ENCODE measurements at regions of chr10 and their contacts with region 1.

Region 1: DNA sequence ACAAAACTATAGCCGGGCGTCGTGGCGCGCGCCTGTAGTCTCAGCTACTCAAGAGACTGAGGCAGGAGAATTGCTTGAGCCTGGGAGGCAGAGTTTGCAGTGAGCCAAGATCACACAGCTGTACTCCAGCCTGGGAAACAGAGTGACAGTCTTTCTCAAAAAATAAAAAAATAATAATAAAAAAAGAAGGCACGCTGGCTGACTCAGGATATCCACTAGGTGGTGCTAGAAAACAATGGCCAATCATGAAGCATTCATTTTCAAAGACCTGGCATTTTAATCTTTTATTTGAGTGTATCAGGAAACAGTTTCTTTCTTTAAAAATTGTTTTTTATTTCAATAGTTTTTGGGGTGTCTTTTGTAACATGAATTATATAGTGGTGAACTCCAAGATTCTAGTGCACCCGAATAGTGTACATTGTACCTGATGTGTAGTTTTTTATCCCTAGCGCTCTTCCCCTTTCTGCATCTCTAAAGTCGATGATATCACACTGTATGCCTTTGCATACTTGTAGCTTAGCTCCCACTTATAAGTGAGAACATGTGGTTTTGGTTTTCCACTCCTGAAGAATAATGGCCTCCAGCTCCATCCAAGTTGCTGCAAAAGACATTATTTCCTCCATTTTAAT is 88.6 kb downstream of the LYZL1 start:
- DNase-seq: peak; percentile 8
- ATAC-seq: peak; percentile 60
- H3K4me3 ChIP-seq: no peak overlapping the region
- H3K27ac ChIP-seq: no peak overlapping the region
- H3K4me1 ChIP-seq: no peaks in the 10 kb centered on the region
- H3K27me3 ChIP-seq: no peaks in the 10 kb centered on the region
- CTCF ChIP-seq: peak; percentile 61 to 78 (median 77)
- POLR2A ChIP-seq: no peak
- RAD21 ChIP-seq: peak; percentile 73

Region 2: DNA sequence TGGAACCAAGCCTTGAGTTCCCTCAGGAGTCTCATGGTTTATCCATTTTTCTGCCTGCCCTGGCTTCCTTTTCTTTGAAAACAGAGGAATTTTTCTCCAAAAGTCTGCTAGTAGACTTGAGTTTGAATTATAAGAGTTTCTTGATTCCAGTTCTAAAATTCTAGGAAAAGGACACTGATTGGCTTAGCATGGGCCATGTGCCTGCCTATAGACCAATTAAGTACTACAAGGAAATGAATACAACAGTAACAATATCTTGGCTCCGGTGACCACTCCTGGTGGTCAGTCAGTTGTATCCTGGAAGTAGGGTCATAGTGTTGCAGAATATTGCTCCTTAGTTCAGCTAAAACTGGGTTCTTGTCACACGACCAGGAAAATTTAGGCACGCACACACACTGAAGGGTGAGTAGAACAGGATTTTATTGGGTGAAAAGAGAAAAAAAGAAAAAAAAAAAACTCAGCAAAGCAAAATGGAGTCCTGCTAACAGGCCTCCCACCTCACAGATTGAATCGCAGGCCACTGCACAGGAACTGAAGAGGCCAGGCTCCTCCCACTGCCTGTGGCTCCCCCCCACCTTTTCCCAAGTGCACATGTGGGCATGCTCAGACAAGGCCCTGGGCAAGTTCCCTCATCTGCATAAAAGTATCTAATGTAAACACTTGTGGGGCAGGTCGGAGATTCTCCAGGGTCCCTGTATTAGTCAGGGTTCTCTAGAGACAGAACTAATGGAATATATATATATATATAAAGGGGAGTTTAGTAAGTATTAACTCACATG is 66.5 kb after region 1 on chr10:
- CTCF ChIA-PET with region 1: no interaction called
- POLR2A ChIA-PET with region 1: no interaction called
- RAD21 ChIA-PET with region 1: no interaction called
- intact Hi-C with region 1: loop called (anchors 1 kb)
- DNase-seq: no peak
- ATAC-seq: peak; percentile 58
- H3K4me3 ChIP-seq: no peak overlapping the region
- H3K27ac ChIP-seq: no peak overlapping the region
- H3K4me1 ChIP-seq: peaks cover 4 to 16% of the 10 kb centered on the region in 2 experiments
- H3K27me3 ChIP-seq: no peaks in the 10 kb centered on the region
- CTCF ChIP-seq: no peak
- POLR2A ChIP-seq: no peak
- RAD21 ChIP-seq: no peak

Region 3: GRCh38 chr10:29496341-29497162 is 119.1 kb after region 1 on chr10:
- CTCF ChIA-PET with region 1: no interaction called
- POLR2A ChIA-PET with region 1: no interaction called
- RAD21 ChIA-PET with region 1: no interaction called
- intact Hi-C with region 1: loop called (anchors 1 kb)
- DNase-seq: peak; percentile 28
- ATAC-seq: peak; percentile 99
- H3K4me3 ChIP-seq: no peak overlapping the region
- H3K27ac ChIP-seq: no peak overlapping the region
- H3K4me1 ChIP-seq: peaks cover under 1 to 3% of the 10 kb centered on the region in 2 experiments; a peak in 3 of 4 replicates
- H3K27me3 ChIP-seq: no peaks in the 10 kb centered on the region
- CTCF ChIP-seq: peak; percentile 77 to 99 (median 97)
- POLR2A ChIP-seq: no peak
- RAD21 ChIP-seq: peak; percentile 73

Measured in HCT116 (cell line).